ENCODE measurements at regions of chr1 and their contacts with region 1.

Region 1: DNA sequence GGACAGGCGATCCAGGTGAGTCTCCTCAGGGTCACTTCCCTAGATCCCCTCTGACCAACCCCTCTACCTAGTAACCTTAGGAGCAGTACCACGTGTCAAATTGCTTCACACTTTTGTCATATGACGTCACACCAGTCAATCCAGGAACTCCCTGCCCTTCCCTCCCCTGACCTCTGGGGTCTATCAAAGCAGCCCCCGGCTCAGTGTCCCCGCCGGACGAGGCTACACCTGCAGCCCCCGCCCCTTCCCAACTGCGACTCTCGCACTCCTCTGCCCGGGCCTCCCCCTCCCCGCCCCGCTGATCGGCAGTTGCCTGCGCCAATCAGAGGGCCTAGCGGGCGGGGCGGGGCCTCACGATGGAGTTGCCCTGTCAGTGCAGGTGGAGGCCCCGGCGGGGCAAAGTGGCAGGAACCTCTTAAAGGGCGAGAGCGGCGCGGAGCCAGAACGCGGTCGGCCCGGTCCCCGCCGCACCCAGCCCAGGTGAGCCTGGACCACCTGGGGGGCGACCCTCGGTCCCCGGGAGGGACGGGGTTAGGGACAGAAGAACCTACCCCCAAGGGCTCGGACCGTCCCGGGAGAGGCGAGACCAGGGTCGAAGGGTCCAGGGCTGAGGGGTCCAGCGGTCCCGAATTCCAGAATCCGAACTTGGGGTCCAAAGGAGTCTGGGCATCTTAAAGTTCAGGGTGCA is 27.5 kb upstream of the EPB41 start:
- DNase-seq: peak; percentile 18
- H3K4me3 ChIP-seq: peak overlapping the region; percentile 62
- H3K27ac ChIP-seq: no peak overlapping the region
- H3K27me3 ChIP-seq: peaks cover 11% of the 10 kb centered on the region
- CTCF ChIP-seq: no peak

Region 2: DNA sequence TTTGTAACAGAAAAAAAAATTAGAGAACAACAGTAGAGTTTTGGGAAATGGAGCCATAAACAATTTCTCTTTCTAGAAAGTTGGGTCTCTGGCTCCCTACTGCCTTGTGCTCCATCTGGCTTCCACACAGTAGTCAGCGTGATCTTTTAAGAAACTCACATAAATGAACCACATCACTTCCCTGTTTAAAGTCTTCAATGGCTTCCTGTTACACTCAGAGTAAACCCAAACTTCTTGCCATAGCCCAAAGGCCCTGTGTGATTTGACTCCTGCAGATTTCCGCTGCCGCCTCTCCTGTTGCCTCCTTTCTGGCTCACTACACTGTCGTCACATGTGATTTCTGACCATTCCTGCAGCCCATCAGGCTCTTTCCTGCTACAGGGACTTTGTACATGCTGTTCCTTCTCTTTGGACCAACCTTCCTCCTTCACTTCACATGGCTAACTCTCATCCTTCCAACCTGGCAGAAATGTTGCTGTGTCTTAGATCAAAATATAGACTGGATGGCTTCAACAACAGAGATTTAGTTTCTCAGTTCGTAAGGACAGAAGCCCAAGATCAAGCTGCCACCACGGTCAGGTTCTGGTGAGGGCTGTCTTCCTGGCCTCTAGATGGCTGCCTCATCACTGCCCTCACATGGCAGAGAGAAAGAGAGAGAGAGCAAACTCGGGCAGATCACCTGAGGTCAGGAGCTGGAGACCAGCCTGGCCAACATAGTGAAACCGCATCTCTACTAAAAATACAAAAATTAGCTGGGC is 40.9 kb before region 1 on chr1:
- CTCF ChIA-PET with region 1: no interaction called
- POLR2A ChIA-PET with region 1: no interaction called
- DNase-seq: no peak
- H3K4me3 ChIP-seq: no peak overlapping the region
- H3K27ac ChIP-seq: no peak overlapping the region
- H3K27me3 ChIP-seq: peaks cover 5% of the 10 kb centered on the region
- CTCF ChIP-seq: peak; percentile 29; the same call in 1 of the 2 replicates

Region 3: GRCh38 chr1:28914228-28915030 is 27.6 kb after region 1 on chr1 and contains the start of gene EPB41:
- CTCF ChIA-PET with region 1: interaction called, 12 read pairs
- POLR2A ChIA-PET with region 1: no interaction called
- DNase-seq: peak; percentile 72
- H3K4me3 ChIP-seq: peak within 1 kb of the TSS; percentile 64
- H3K27ac ChIP-seq: no peak within 1 kb of the TSS
- H3K27me3 ChIP-seq: no peaks in the 10 kb centered on the region
- CTCF ChIP-seq: no peak
- polyA plus RNA-seq, gene EPB41: 6.5 and 7.8 TPM in 2 replicates

Region 4: GRCh38 chr1:29197585-29197924 is 310.7 kb after region 1 on chr1:
- CTCF ChIA-PET with region 1: interaction called, 108 read pairs
- POLR2A ChIA-PET with region 1: interaction called, 7 read pairs
- DNase-seq: no peak
- H3K4me3 ChIP-seq: no peak overlapping the region
- H3K27ac ChIP-seq: peak overlapping the region; percentile 94
- H3K27me3 ChIP-seq: no peaks in the 10 kb centered on the region
- CTCF ChIP-seq: peak; percentile 58

Region 5: DNA sequence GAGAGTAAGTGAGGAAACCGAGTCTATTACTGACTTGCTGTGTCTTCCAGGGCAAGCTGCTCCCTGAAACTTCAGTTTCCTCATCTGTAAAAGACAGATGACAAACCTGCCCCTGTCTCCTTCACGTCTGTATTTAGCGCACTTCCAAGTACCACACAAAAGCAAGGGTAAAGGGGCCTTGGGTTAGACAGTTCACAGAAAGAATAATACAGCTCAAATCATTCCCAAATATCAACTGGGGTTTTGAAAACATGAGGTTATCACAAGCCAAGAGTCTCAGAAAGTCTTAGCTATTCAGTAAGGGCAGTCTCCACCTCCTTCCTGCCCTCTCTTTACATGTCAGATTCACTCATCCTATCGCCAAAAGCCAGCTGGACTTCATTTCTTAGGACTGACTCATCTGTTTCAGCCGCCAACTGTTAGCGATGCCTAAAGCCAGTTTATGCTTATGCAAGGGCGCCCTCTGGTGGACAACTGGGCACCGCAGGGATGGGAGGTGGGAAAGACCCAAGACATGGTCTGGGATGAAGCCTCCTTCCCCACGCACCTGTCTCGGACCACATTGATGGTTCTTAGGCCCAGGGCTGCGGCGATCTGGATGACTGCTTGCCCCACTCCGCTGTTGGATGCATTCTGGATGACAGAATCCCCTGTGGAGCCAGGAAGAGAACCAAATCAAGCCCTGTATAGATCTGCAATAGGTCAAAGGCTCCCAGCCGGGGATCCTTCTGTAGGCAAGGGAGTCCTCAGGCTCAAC is 315.9 kb after region 1 on chr1:
- CTCF ChIA-PET with region 1: interaction called, 108 read pairs
- POLR2A ChIA-PET with region 1: interaction called, 7 read pairs
- DNase-seq: peak; percentile 98
- H3K4me3 ChIP-seq: no peak overlapping the region
- H3K27ac ChIP-seq: peak overlapping the region; percentile 92
- H3K27me3 ChIP-seq: no peaks in the 10 kb centered on the region
- CTCF ChIP-seq: peak; percentile 95

Region 6: DNA sequence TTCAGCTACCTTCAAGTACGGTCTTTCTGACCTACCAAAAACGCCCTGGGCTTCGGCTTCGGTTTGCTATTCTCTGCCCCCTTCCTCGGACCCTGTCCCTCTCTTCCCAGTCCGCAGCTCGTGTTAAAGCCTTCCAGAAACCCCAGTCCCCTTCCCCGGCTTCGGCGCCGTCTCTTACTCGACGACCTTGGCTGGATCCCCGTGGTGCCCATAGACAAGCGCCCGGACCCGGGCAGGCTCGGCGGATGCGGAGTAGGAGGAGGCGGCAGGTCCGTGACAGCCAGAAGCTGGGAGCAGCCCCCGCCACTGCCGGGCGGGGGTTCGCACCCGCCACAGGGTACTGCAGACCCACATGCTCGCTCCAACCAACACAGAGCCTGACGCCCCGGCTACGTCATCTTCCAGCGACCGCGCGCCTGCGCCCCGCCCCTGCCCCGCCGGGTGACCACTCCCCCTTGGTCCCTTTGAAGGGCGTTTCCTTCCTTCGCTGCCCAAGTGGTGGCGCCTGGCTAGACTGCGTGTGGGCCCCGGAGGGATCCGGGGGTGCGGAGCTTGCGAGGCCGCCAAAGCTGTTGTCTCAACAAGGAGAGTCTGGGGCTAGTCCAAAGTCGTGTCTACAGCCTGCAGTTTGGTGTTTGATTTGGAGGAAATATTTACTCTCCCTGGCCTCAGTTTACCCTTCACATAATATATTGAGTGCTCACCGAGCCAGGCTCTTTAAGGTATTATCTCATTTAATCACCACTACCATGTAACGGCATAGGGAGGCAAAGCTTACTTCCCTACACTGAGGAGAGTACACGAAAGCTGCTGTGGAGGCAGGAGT is 343.9 kb after region 1 on chr1 and contains the start of gene MECR:
- CTCF ChIA-PET with region 1: no interaction called
- POLR2A ChIA-PET with region 1: no interaction called
- DNase-seq: peak; percentile 51
- H3K4me3 ChIP-seq: peak within 1 kb of the TSS; percentile 93
- H3K27ac ChIP-seq: peak within 1 kb of the TSS; percentile 39
- H3K27me3 ChIP-seq: peaks cover 6% of the 10 kb centered on the region
- CTCF ChIP-seq: peak; percentile 24; the same call in 1 of the 2 replicates
- polyA plus RNA-seq, gene MECR: 18.2 and 23.4 TPM in 2 replicates